ENCODE measurements at regions of chr4 and their contacts with region 1.

Region 1: GRCh38 chr4:140153718-140154571 is at the start of gene MAML3:
- DNase-seq: peak; percentile 90 to 96
- H3K4me3 ChIP-seq: peak within 1 kb of the TSS; percentile 53
- H3K4me1 ChIP-seq: peaks cover 11% of the 10 kb centered on the region; the same call in 1 of the 2 replicates
- H3K27me3 ChIP-seq: no peaks in the 10 kb centered on the region

Region 2: DNA sequence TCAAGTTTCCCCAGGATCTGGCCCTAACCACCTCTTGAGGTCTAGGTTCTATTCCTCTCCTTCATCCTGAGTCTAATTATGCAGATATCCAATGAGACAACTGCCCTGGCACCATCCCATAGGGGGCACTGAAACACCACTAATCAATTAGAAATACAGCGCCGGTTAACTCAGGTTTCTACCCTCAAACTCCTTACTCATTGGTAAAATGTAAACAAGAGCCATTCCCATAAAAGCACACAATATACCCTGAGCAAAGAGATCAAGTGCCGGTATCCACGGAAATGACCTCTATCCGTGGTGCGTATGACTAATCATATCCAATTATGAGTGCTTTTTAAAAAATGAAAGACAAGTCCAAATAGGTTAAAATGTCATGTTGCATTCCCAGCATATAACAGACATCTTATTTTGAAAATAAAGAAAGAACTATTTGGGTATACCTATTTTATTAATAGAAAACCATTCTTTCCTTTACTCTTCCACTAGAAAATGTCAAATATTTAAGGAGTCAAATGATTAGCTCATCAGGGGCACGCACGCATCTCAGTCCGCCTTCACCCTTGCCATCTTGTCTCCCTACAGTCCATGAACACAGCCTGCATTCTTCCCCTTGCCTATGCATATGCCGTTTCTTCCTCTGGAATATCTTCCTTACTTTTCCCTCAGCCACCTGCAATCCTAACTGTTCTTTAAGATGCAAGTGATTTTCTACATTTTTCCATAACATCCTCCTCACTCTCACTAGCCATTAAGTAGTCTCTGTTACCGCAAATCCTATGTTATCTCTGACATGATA is 141.1 kb before region 1 on chr4:
- in situ Hi-C with region 1: loop called (anchors 10 kb)
- DNase-seq: peak; percentile 75 to 81
- H3K4me3 ChIP-seq: no peak overlapping the region
- H3K4me1 ChIP-seq: peaks cover 3% of the 10 kb centered on the region
- H3K27me3 ChIP-seq: no peaks in the 10 kb centered on the region; the same call in 1 of the 2 replicates

Region 3: GRCh38 chr4:140049024-140049848 is 104.7 kb before region 1 on chr4:
- in situ Hi-C with region 1: loop called (anchors 10 kb)
- DNase-seq: peak in 1 of 2 experiments; percentile 29
- H3K4me3 ChIP-seq: no peak overlapping the region
- H3K4me1 ChIP-seq: no peaks in the 10 kb centered on the region; the same call in 1 of the 2 replicates
- H3K27me3 ChIP-seq: no peaks in the 10 kb centered on the region

Region 4: DNA sequence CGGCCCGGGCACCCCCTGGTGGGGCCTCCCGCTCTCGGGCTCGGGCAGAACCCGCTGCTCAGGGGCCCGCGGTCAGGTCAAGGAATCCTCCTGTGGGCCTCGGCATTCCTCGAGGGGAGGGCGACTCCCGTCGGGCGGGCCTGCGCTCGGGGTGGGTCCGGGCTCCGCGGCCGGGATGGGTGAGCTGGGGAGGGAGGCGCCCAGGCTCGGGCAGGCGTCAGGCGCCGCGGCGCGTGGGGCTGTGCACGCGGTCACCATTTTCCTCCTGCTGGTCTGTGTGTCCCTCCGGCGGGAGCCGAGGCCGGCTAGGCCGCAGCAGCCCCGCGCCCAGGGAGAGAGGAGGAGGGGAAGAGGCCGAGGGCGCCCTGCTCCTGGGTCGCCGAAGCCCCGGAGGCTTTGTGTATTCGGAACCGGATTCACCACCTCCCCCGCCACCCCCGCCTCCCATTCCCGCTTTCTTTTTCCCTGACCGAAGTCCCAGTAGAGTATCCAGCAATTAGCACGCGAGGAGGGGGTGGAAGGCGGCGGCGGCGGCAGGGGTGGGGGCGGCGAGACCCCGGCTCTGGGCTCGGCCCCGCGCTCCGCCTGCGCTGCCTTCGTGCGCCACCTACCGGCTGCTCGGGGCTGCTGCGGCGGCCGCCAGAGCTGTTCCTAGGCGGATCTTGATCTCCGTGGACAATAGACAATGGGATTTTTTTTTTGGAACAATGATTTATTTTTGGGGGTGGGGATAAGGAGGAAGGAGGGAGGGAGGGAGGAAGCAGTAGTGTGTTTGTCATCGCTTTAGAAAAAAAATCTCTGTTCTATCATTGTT is 99.0 kb after region 1 on chr4:
- in situ Hi-C with region 1: loop called (anchors 5 kb)
- DNase-seq: peak; percentile 87
- H3K4me3 ChIP-seq: peak overlapping the region; percentile 30
- H3K4me1 ChIP-seq: peaks cover 13% of the 10 kb centered on the region
- H3K27me3 ChIP-seq: no peaks in the 10 kb centered on the region

Region 5: DNA sequence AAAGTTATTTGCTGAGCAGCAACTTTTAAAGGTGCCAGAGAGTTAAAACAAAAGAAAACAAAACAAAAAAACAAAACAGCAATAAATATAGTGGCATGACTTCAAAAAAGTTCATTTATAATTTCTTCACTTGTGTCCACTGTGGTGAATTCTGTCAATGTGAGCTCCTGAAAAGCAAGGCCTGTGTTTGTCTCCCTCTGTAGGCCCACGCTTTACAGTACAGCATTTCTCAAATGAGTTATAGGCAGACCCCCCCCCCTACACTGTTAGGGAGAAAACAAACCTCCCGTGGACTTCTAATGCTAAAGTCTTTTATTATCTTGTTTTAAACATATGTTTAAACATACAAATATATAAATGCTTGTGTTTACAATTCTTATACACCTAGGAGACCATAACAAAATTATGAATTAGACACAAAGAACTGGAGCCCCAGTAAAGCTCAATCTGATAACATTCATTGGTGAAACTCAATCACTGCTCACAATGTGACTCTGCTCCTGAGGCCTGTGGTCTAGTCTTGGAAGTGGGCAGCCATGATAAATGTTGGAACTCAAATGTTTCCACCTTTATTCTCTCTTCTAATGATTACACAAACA is 172.5 kb after region 1 on chr4:
- in situ Hi-C with region 1: loop called (anchors 10 kb)
- DNase-seq: peak; percentile 24 to 44
- H3K4me3 ChIP-seq: no peak overlapping the region
- H3K4me1 ChIP-seq: no peaks in the 10 kb centered on the region
- H3K27me3 ChIP-seq: peaks cover 13% of the 10 kb centered on the region; the same call in 1 of the 2 replicates